ENCODE measurements at regions of chr13 and their contacts with region 1.

Region 1: DNA sequence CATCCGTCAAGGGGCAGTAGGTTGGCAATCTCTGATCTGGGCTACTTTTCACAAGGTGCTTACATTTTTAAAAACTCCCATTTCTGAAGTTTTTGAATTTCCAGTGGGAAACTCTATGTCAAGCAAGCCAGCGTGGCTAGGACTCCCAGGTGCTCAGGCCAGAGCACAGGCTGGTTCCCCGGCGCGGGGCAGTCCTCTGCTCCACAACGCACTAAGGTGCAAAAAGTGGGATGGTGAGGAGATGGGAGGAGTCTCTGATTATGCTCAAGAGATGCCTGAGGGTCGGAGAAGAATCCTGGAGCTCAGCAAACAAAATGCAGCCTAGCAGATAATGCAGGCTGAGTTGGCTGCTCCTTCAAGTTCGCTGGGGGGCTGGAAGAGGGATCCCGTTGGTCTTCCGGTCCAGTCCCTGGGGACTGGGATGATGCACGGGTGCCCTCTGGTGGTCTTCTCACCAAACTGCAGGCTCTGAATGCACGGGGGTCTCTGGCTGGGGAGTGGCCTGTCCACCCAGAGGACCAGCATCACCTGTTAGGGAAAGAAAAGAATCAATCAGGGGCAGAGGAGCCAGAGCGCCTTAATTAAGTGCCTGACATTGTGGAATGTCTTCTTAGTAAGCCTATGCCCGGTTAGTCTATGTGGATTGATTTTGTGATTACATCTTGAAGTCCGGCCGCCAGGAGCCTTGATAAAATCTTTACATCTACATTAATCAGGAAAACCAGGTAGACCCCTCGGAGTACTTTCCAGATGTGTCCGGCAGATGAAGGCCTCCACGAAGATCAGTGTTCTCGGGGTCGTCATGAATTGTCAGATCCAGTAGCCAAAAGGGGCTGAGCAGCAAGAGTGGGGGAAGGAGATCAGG is 244.4 kb upstream of the MAB21L1 start:
- DNase-seq: peak; percentile 22
- ATAC-seq: peak; percentile 82
- H3K4me3 ChIP-seq: peak overlapping the region; percentile 1 to 16; a peak in 1 of 4 replicates
- H3K27ac ChIP-seq: no peak overlapping the region
- H3K4me1 ChIP-seq: no peaks in the 10 kb centered on the region
- H3K27me3 ChIP-seq: no peaks in the 10 kb centered on the region
- CTCF ChIP-seq: peak; percentile 92

Region 2: GRCh38 chr13:35179494-35179893 is 541.4 kb before region 1 on chr13:
- CTCF ChIA-PET with region 1: no interaction called
- POLR2A ChIA-PET with region 1: no interaction called
- in situ Hi-C with region 1: no loop called
- intact Hi-C with region 1: loop called (anchors 10 kb)
- DNase-seq: no peak
- ATAC-seq: no peak
- H3K4me3 ChIP-seq: no peak overlapping the region
- H3K27ac ChIP-seq: no peak overlapping the region
- H3K4me1 ChIP-seq: no peaks in the 10 kb centered on the region
- H3K27me3 ChIP-seq: no peaks in the 10 kb centered on the region
- CTCF ChIP-seq: no peak

Region 3: GRCh38 chr13:35210261-35210660 is 510.7 kb before region 1 on chr13:
- CTCF ChIA-PET with region 1: no interaction called
- POLR2A ChIA-PET with region 1: no interaction called
- in situ Hi-C with region 1: no loop called
- intact Hi-C with region 1: loop called (anchors 10 kb)
- DNase-seq: no peak
- ATAC-seq: no peak
- H3K4me3 ChIP-seq: no peak overlapping the region
- H3K27ac ChIP-seq: no peak overlapping the region
- H3K4me1 ChIP-seq: no peaks in the 10 kb centered on the region
- H3K27me3 ChIP-seq: no peaks in the 10 kb centered on the region
- CTCF ChIP-seq: no peak; the same call in 1 of the 2 replicates

Region 4: DNA sequence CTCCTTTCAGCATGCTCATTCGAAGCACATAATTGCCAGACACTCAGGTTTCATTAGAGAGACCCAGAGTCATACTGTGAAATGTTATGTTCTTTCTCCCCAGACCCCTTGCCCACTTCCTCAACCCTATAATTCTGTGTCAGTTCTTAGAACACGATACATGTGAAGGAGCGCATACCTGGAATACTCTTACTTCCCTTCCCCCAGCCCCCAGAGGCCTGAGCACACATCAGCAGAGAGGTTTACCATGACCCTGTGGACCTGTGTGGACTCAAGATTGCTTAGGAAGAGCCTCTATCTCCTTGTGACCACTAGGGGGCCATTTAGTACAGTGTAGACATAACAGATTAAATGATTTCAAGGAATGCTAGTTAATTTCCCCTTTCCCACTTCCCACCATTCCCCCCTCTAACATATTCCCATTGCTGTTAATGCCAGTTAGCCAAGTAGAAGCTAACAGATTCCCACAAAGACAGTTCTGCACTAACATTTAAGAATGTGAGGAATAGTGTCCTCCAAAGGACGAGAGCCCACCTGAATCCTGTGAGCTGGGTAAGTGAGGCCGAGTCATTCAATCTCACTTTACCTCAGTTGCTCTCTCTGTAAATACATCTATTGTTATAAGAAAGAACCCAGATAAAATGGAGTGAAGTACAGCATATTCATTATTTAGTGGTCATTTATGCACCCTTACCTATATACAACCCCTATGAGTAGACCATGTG is 90.2 kb before region 1 on chr13:
- CTCF ChIA-PET with region 1: no interaction called
- POLR2A ChIA-PET with region 1: no interaction called
- in situ Hi-C with region 1: no loop called
- intact Hi-C with region 1: loop called (anchors 10 kb)
- DNase-seq: no peak
- ATAC-seq: peak; percentile 80
- H3K4me3 ChIP-seq: no peak overlapping the region
- H3K27ac ChIP-seq: no peak overlapping the region
- H3K4me1 ChIP-seq: no peaks in the 10 kb centered on the region
- H3K27me3 ChIP-seq: no peaks in the 10 kb centered on the region
- CTCF ChIP-seq: peak; percentile 72